Naive thymus-derived CD4-positive, alpha-beta T cell (primary cell): ENCODE measurements at regions of chr2 and their contacts with region 1.

Region 1: DNA sequence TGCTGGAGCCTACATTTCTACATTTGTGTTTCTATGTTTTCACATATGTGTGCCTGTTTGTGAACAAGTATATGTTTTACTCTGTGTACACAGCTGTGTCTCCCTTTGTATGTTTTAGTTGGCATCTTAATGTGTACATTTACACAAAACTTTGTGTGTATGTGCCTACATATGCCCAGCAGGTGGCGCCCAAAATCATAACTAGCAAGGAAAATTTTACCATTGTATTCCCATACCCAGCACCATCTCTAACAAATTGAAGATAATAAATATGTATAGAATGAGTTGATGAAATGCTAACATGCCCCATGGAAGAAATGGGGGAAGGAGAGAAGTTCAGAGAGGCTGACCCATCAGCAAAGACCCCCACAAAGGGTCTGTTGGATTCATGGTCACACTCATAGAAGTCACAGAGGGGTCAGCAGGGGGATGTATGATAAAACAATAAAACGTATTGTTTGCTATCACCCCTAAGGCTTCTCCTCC is 48.1 kb downstream of the PKDCC start:
- DNase-seq: peak; percentile 46 to 78 (median 71)
- ATAC-seq: peak; percentile 71
- H3K4me3 ChIP-seq: no peak overlapping the region
- H3K4me3 Mint-ChIP-seq: no peak overlapping the region
- H3K27ac ChIP-seq: no peak overlapping the region
- H3K27ac Mint-ChIP-seq: peak overlapping the region in 7 of 9 donors; percentile 4 to 70 (median 25)
- H3K4me1 ChIP-seq: peaks cover 33 to 38% of the 10 kb centered on the region in 2 donors
- H3K4me1 Mint-ChIP-seq: peaks cover 37 to 50% (median 47%) of the 10 kb centered on the region in 7 donors
- H3K27me3 ChIP-seq: no peaks in the 10 kb centered on the region
- H3K27me3 Mint-ChIP-seq: peaks cover 0 to 35% (median 0%) of the 10 kb centered on the region in 5 donors

Region 2: DNA sequence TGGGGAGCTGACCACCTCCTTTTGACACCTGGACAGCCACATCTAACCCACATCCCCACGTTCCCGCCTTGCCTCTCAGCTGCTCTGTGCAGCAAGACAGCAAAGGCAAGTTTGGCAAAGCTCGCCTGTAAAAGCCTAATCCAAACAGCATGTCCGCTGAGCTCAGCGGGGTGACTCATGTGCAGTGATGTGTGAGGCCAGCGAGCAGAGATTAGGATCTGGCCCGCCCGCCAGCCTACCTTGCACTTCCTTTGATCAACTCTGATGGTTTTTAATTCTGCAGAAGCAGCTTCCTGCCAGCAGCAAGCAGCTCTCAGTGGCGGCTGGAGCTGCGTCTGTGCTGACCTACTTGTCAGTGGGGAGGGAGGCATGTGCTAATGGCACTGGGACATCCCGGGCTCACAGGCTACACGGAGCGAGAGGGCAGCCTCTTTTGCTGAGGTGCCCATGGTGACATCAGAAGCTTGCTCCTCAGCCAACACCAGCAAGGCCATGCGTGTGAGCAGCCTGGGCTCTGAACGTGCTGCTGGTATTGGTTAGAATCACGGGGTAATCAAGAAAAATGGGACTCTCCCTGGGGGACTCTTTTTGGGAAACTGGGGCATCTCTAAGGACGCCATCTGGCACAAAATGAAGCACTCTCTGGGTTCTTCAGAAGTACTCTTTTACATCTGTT is 37.1 kb after region 1 on chr2:
- CTCF ChIA-PET with region 1: interaction called, 14 read pairs
- POLR2A ChIA-PET with region 1: interaction called, 636 read pairs
- intact Hi-C with region 1: loop called in 1 of 2 experiments (anchors 1 kb)
- DNase-seq: peak; percentile 53 to 92 (median 78)
- ATAC-seq: peak; percentile 94
- H3K4me3 ChIP-seq: peak overlapping the region; percentile 38
- H3K4me3 Mint-ChIP-seq: peak overlapping the region; percentile 66 to 86 (median 76)
- H3K27ac ChIP-seq: peak overlapping the region; percentile 82
- H3K27ac Mint-ChIP-seq: peak overlapping the region; percentile 68 to 98 (median 96)
- H3K4me1 ChIP-seq: peaks cover 81 to 89% of the 10 kb centered on the region in 2 donors
- H3K4me1 Mint-ChIP-seq: peaks cover 57 to 95% (median 93%) of the 10 kb centered on the region in 7 donors
- H3K27me3 ChIP-seq: no peaks in the 10 kb centered on the region
- H3K27me3 Mint-ChIP-seq: no peaks in the 10 kb centered on the region

Region 3: GRCh38 chr2:42191285-42192009 is 95.5 kb after region 1 on chr2:
- CTCF ChIA-PET with region 1: interaction called, 59 read pairs
- POLR2A ChIA-PET with region 1: interaction called, 12 read pairs
- intact Hi-C with region 1: loop called (anchors 1 kb)
- DNase-seq: no peak
- ATAC-seq: no peak
- H3K4me3 ChIP-seq: no peak overlapping the region
- H3K4me3 Mint-ChIP-seq: peak overlapping the region in 8 of 10 donors; percentile 6 to 55 (median 30)
- H3K27ac ChIP-seq: no peak overlapping the region
- H3K27ac Mint-ChIP-seq: peak overlapping the region in 8 of 9 donors; percentile 55 to 91 (median 81)
- H3K4me1 ChIP-seq: peaks cover 37 to 41% of the 10 kb centered on the region in 2 donors
- H3K4me1 Mint-ChIP-seq: peaks cover 37 to 91% (median 84%) of the 10 kb centered on the region in 7 donors
- H3K27me3 ChIP-seq: no peaks in the 10 kb centered on the region
- H3K27me3 Mint-ChIP-seq: no peaks in the 10 kb centered on the region

Region 4: DNA sequence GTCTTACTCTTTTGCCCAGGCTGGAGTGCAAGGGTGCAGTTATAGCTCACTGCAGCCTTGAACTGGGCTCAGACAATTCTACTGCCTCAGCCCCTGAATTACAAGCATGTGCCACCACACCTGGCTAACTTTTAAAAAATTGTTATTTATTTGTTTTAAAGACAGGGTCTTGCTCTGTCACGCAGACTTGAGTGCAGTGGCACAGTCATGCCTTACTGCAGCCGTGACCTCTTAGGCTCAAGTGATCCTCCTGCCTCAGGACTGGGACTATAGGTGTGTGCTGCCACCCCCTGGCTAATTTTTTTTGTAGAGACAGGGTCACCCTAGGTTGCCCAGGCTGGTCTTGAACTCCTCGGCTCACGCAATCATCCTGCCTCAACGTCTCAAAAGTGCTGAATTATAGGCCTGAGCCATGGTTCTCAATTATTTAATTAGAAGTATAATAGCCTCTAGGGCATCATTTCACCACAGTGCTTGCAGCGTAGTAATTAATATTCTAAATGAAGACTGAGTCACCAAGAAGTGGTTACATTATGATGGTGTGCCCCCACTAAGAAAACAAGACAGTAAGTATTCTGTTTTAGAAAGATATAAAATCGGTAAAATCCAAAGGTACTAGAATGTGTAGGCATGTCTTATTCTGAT is 142.8 kb after region 1 on chr2:
- CTCF ChIA-PET with region 1: interaction called, 6 read pairs
- POLR2A ChIA-PET with region 1: interaction called, 3 read pairs
- intact Hi-C with region 1: loop called (anchors 1 kb)
- DNase-seq: peak in 6 of 9 donors; percentile 22 to 42 (median 30)
- ATAC-seq: peak; percentile 75
- H3K4me3 ChIP-seq: no peak overlapping the region
- H3K4me3 Mint-ChIP-seq: peak overlapping the region in 1 of 10 donors; percentile 9
- H3K27ac ChIP-seq: no peak overlapping the region
- H3K27ac Mint-ChIP-seq: peak overlapping the region in 2 of 9 donors; percentile 43 to 65
- H3K4me1 ChIP-seq: peaks cover 32 to 33% of the 10 kb centered on the region in 2 donors
- H3K4me1 Mint-ChIP-seq: peaks cover 28 to 97% (median 89%) of the 10 kb centered on the region in 7 donors
- H3K27me3 ChIP-seq: no peaks in the 10 kb centered on the region
- H3K27me3 Mint-ChIP-seq: no peaks in the 10 kb centered on the region

Region 5: DNA sequence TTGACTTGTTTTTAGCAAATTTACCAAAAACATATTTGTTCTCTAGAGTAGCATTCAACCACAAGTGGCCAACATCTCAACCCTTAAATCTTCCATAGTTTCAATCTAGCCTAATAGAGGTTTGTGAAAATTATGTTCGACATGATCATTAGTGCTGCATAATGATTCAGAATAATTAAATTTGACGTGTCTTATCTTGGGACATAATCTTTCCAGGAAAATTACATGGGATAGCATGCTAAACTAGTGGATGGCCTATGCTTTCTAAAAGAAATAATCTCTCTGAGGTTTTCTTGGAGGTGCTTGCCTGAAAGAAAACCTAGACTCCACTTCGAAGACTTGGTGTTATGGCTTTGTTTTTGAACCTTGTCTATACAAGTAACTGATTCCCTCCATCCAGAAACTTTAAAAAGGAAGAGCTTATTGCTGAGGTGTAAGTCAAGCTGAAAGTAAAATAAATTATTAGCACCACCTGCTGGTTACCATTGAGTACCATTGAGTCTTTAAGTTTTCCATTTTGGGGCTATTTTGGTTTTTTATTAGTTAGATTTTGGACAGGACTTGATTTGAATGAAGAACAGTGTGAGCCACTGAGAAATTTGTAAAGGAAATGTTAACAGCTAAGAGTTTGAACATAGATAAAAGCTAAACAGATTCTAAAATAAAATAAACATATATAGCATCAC is 232.3 kb after region 1 on chr2:
- CTCF ChIA-PET with region 1: interaction called, 6 read pairs
- POLR2A ChIA-PET with region 1: interaction called, 3 read pairs
- intact Hi-C with region 1: loop called (anchors 1 kb)
- DNase-seq: peak in 5 of 9 donors; percentile 13 to 34 (median 32)
- ATAC-seq: peak; percentile 57
- H3K4me3 ChIP-seq: no peak overlapping the region
- H3K4me3 Mint-ChIP-seq: no peak overlapping the region
- H3K27ac ChIP-seq: no peak overlapping the region
- H3K27ac Mint-ChIP-seq: peak overlapping the region in 7 of 9 donors; percentile 12 to 77 (median 57)
- H3K4me1 ChIP-seq: no peaks in the 10 kb centered on the region
- H3K4me1 Mint-ChIP-seq: peaks cover 0 to 5% (median 0%) of the 10 kb centered on the region in 7 donors
- H3K27me3 ChIP-seq: no peaks in the 10 kb centered on the region
- H3K27me3 Mint-ChIP-seq: no peaks in the 10 kb centered on the region

Region 6: DNA sequence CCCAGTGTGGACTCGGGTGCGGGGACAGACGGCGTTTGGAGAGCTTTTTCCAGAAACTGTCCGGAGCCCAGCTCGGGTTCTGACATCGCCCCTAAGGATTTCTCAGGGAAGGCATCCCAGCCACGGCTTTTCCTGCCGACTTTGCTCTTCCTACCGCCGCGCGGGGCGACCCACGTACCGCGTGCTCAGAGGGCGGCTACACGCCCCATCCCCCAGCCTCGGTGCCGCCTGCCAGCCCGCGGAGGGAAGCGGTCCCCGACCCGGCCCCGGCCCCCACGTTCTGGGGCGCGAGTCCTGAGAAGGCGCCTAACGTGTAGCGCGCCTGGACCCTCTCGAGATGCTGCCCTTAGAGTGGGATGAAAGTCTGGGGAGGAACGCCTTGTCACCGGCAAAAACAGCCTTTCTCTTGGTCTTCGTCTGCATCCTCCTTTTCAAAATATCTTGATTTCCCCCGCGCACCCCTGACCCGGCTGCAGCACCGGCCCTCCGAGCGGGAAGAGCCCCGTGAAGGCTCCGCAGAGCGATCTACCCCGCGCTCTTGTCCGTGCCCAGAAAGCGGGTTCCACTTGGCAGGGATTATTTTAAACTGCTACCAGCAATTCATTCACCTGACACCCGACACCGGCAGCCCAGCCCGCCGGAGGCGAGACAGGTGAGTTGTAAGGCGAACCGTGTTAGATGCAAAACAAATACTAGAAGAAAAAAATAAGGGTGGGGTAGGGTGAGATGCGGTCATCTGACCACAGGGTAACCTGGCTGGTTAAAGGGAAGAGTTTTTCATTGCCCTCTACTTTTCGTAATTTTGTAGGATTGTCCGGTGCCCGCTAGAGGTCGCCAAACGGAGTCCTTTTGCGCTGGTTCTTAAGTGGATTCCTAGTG is 398.6 kb after region 1 on chr2:
- CTCF ChIA-PET with region 1: no interaction called
- POLR2A ChIA-PET with region 1: no interaction called
- intact Hi-C with region 1: loop called (anchors 5 to 10 kb)
- DNase-seq: peak; percentile 60 to 83 (median 77)
- ATAC-seq: peak; percentile 74
- H3K4me3 ChIP-seq: peak overlapping the region; percentile 60
- H3K4me3 Mint-ChIP-seq: peak overlapping the region; percentile 82 to 99 (median 96)
- H3K27ac ChIP-seq: peak overlapping the region; percentile 51
- H3K27ac Mint-ChIP-seq: peak overlapping the region; percentile 37 to 93 (median 83)
- H3K4me1 ChIP-seq: peaks cover 0 to 10% of the 10 kb centered on the region in 2 donors
- H3K4me1 Mint-ChIP-seq: peaks cover 0 to 18% (median 10%) of the 10 kb centered on the region in 7 donors
- H3K27me3 ChIP-seq: no peaks in the 10 kb centered on the region
- H3K27me3 Mint-ChIP-seq: peaks cover 0 to 49% (median 5%) of the 10 kb centered on the region in 5 donors